HCT116 (cell line): ENCODE measurements at regions of chr3 and their contacts with region 1.

Region 1: DNA sequence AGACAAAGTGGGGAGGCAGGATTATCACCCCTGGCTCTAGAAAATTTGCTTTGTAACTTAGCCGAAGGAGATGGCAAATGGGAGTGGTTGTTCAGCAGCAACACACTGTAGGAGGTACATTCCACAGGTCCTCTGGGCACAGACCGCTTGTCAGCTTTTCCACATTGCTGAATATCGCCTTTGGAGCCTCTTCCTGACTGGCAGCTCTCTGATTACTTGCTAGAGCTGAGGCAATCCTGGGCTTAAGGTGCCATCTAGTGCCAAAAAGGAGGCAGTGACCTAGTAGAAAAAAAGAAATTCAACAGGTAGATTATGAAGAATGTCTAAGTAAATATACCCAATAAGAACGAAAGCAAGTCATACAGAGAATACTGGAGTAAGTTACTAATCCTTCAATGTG is 13.1 kb upstream of the SCN5A start:
- DNase-seq: peak; percentile 62
- ATAC-seq: peak; percentile 97
- H3K4me3 ChIP-seq: no peak overlapping the region
- H3K27ac ChIP-seq: no peak overlapping the region
- H3K4me1 ChIP-seq: 0 out of 4 replicates have a peak, but pooled peaks cover 0 to 2% of the 10 kb centered on the region in 2 experiments
- H3K27me3 ChIP-seq: no peaks in the 10 kb centered on the region
- CTCF ChIP-seq: peak; percentile 68 to 83 (median 74)
- POLR2A ChIP-seq: no peak
- RAD21 ChIP-seq: peak; percentile 92

Region 2: GRCh38 chr3:37979541-37980461 is 682.7 kb before region 1 on chr3:
- CTCF ChIA-PET with region 1: no interaction called
- POLR2A ChIA-PET with region 1: no interaction called
- RAD21 ChIA-PET with region 1: no interaction called
- intact Hi-C with region 1: loop called (anchors 5 kb)
- DNase-seq: no peak
- ATAC-seq: no peak
- H3K4me3 ChIP-seq: no peak overlapping the region
- H3K27ac ChIP-seq: no peak overlapping the region
- H3K4me1 ChIP-seq: no peaks in the 10 kb centered on the region
- H3K27me3 ChIP-seq: no peaks in the 10 kb centered on the region
- CTCF ChIP-seq: no peak
- POLR2A ChIP-seq: no peak
- RAD21 ChIP-seq: no peak

Region 3: DNA sequence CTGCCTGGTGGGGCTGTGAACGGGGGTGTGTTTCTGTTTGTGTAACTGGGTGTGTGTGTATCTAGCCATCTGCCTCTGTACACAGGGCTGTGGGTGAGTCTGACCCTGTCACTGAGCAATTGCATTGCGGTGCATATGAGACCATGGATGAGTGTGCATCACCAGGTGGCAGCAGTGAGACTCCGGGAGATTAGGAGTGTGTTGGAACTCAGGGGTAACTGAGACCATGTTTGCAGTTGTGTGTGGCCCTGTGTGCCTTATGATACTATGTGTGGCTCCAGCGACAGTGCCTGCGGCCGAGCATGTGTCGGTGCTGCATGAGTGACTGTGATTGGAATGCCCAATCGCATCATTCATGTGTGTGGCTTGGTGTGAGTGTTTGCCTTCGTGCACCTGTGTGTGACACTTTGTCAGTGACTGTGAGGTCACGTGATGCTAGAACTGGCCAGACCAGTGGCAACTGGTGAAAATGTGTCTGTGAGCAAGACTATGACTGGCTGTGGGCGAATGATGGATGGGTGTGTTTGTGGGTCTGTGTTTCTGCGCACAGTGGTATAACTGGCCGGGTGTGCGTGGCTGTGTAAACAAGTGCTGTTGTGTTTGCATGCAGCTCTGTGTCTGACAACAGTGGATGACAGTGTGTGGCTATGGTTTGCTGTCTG is 658.0 kb before region 1 on chr3:
- CTCF ChIA-PET with region 1: interaction called, 3 read pairs
- POLR2A ChIA-PET with region 1: no interaction called
- RAD21 ChIA-PET with region 1: no interaction called
- intact Hi-C with region 1: loop called (anchors 2 kb)
- DNase-seq: peak; percentile 54
- ATAC-seq: peak; percentile 77
- H3K4me3 ChIP-seq: no peak overlapping the region
- H3K27ac ChIP-seq: no peak overlapping the region; the same call in 1 of the 2 replicates
- H3K4me1 ChIP-seq: peaks cover 0 to 24% of the 10 kb centered on the region in 2 experiments; a peak in 2 of 4 replicates
- H3K27me3 ChIP-seq: no peaks in the 10 kb centered on the region
- CTCF ChIP-seq: peak in 2 of 3 experiments; percentile 77 to 85; a peak in 4 of 6 replicates
- POLR2A ChIP-seq: no peak
- RAD21 ChIP-seq: no peak

Region 4: GRCh38 chr3:38496131-38496910 is 166.2 kb before region 1 on chr3 and contains the start of gene EXOG:
- CTCF ChIA-PET with region 1: interaction called, 7 read pairs
- POLR2A ChIA-PET with region 1: no interaction called
- RAD21 ChIA-PET with region 1: no interaction called
- intact Hi-C with region 1: loop called (anchors 1 kb)
- DNase-seq: peak; percentile 78
- ATAC-seq: peak; percentile 96
- H3K4me3 ChIP-seq: peak within 1 kb of the TSS; percentile 77 to 88
- H3K27ac ChIP-seq: peak within 1 kb of the TSS; percentile 76
- H3K4me1 ChIP-seq: peaks cover 4 to 7% of the 10 kb centered on the region in 2 experiments; a peak in 3 of 4 replicates
- H3K27me3 ChIP-seq: no peaks in the 10 kb centered on the region
- CTCF ChIP-seq: peak; percentile 87 to 88 (median 88)
- POLR2A ChIP-seq: peak; percentile 49
- RAD21 ChIP-seq: peak; percentile 77
- total RNA-seq, gene EXOG: 8.3 TPM

Region 5: GRCh38 chr3:38521391-38521987 is 141.1 kb before region 1 on chr3:
- CTCF ChIA-PET with region 1: interaction called, 40 read pairs
- POLR2A ChIA-PET with region 1: no interaction called
- RAD21 ChIA-PET with region 1: interaction called in 1 of 2 experiments, 3 read pairs
- intact Hi-C with region 1: loop called (anchors 2 kb)
- DNase-seq: peak; percentile 62
- ATAC-seq: peak; percentile 78
- H3K4me3 ChIP-seq: no peak overlapping the region
- H3K27ac ChIP-seq: no peak overlapping the region
- H3K4me1 ChIP-seq: no peaks in the 10 kb centered on the region
- H3K27me3 ChIP-seq: no peaks in the 10 kb centered on the region
- CTCF ChIP-seq: peak; percentile 81 to 91 (median 85)
- POLR2A ChIP-seq: no peak
- RAD21 ChIP-seq: peak; percentile 81

Region 6: GRCh38 chr3:38723569-38724394 is 61.2 kb after region 1 on chr3:
- CTCF ChIA-PET with region 1: no interaction called
- POLR2A ChIA-PET with region 1: no interaction called
- RAD21 ChIA-PET with region 1: no interaction called
- intact Hi-C with region 1: no loop called
- DNase-seq: no peak
- ATAC-seq: no peak
- H3K4me3 ChIP-seq: no peak overlapping the region
- H3K27ac ChIP-seq: no peak overlapping the region
- H3K4me1 ChIP-seq: no peaks in the 10 kb centered on the region; a peak in 1 of 4 replicates
- H3K27me3 ChIP-seq: peaks cover 40% of the 10 kb centered on the region; the same call in 1 of the 2 replicates
- CTCF ChIP-seq: no peak
- POLR2A ChIP-seq: no peak
- RAD21 ChIP-seq: no peak